ENCODE measurements at regions of chr3 and their contacts with region 1.

Region 1: GRCh38 chr3:156674046-156674910 is at the start of gene TIPARP:
- DNase-seq: peak; percentile 98
- ATAC-seq: peak; percentile 87
- H3K4me3 Mint-ChIP-seq: peak within 1 kb of the TSS; percentile 93
- H3K27ac Mint-ChIP-seq: peak within 1 kb of the TSS; percentile 89
- H3K4me1 Mint-ChIP-seq: peaks cover 30% of the 10 kb centered on the region
- H3K27me3 Mint-ChIP-seq: peaks cover 2% of the 10 kb centered on the region
- CTCF ChIP-seq: no peak
- total RNA-seq, gene TIPARP: 28.0 to 30.0 TPM

Region 2: DNA sequence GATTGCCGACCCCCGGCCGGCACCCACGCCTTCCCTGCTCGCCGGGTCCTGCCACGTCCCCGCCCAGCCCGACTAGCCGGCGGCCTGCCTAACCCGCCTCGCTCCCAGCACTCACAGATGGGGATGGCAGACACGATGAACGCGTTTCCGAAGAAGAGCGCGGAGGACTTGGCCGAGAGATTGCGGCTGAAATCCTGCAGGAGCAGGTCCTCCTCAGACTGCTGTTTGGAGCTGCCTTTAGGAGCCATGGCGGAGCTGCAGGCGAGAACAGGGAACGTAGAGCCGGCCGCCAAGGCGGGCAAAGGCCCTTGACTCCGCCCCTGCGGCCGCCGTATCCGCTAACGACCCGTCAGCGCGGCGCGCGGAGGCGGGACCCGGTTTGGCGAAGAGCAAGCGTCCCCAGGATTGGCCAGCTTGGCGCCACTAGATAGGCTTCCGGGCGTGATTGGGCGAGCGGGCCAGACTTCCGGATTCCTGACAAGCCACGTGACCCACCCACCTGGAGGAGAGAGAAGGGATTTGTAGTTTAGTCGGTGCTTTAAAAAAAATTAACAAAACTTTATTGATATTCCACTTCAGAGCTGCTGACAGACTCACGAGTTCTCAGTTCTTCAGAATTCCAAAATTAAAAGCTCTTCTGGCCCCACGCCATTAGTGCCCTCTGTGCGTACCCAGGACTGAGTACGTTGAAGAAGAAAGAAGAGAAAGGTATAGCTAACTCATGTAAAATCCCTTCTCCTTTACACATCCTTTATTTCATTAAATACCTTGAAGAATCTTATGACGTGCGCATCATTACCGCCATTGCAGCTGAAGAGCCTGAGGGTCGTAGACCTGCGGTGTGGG is 119.2 kb before region 1 on chr3 and contains the start of gene SSR3:
- CTCF ChIA-PET with region 1: interaction called, 28 read pairs
- POLR2A ChIA-PET with region 1: interaction called, 29 read pairs
- intact Hi-C with region 1: loop called (anchors 2 kb)
- DNase-seq: peak; percentile 100
- ATAC-seq: peak; percentile 100
- H3K4me3 Mint-ChIP-seq: peak within 1 kb of the TSS; percentile 94
- H3K27ac Mint-ChIP-seq: peak within 1 kb of the TSS; percentile 95
- H3K4me1 Mint-ChIP-seq: peaks cover 39% of the 10 kb centered on the region
- H3K27me3 Mint-ChIP-seq: no peaks in the 10 kb centered on the region
- CTCF ChIP-seq: no peak
- total RNA-seq, gene SSR3: 175 TPM

Region 3: GRCh38 chr3:156615592-156616173 is 58.6 kb before region 1 on chr3:
- CTCF ChIA-PET with region 1: no interaction called
- POLR2A ChIA-PET with region 1: no interaction called
- intact Hi-C with region 1: loop called (anchors 5 kb)
- DNase-seq: peak; percentile 33
- ATAC-seq: peak; percentile 73
- H3K4me3 Mint-ChIP-seq: no peak overlapping the region
- H3K27ac Mint-ChIP-seq: peak overlapping the region; percentile 67
- H3K4me1 Mint-ChIP-seq: peaks cover 23% of the 10 kb centered on the region
- H3K27me3 Mint-ChIP-seq: no peaks in the 10 kb centered on the region
- CTCF ChIP-seq: no peak

Region 4: GRCh38 chr3:156816800-156817645 is 142.7 kb after region 1 on chr3:
- CTCF ChIA-PET with region 1: interaction called, 3 read pairs
- POLR2A ChIA-PET with region 1: interaction called, 8 read pairs
- intact Hi-C with region 1: loop called (anchors 5 kb)
- DNase-seq: peak; percentile 89
- ATAC-seq: peak; percentile 77
- H3K4me3 Mint-ChIP-seq: peak overlapping the region; percentile 80
- H3K27ac Mint-ChIP-seq: peak overlapping the region; percentile 98
- H3K4me1 Mint-ChIP-seq: peaks cover 47% of the 10 kb centered on the region
- H3K27me3 Mint-ChIP-seq: no peaks in the 10 kb centered on the region
- CTCF ChIP-seq: no peak

Region 5: GRCh38 chr3:157130467-157131251 is 456.4 kb after region 1 on chr3:
- CTCF ChIA-PET with region 1: interaction called, 4 read pairs
- POLR2A ChIA-PET with region 1: no interaction called
- intact Hi-C with region 1: loop called (anchors 5 kb)
- DNase-seq: peak; percentile 90
- ATAC-seq: peak; percentile 26
- H3K4me3 Mint-ChIP-seq: peak overlapping the region; percentile 50
- H3K27ac Mint-ChIP-seq: peak overlapping the region; percentile 96
- H3K4me1 Mint-ChIP-seq: peaks cover 74% of the 10 kb centered on the region
- H3K27me3 Mint-ChIP-seq: no peaks in the 10 kb centered on the region
- CTCF ChIP-seq: peak; percentile 77